ENCODE measurements at regions of chr9 and their contacts with region 1.

Region 1: GRCh38 chr9:38107811-38108304 is 38.8 kb upstream of the SHB start:
- DNase-seq: no peak
- H3K4me3 ChIP-seq: no peak overlapping the region
- H3K27ac ChIP-seq: no peak overlapping the region
- H3K4me1 ChIP-seq: no peaks in the 10 kb centered on the region
- H3K27me3 ChIP-seq: no peaks in the 10 kb centered on the region
- CTCF ChIP-seq: no peak
- EP300 ChIP-seq: no peak
- POLR2A ChIP-seq: no peak

Region 2: GRCh38 chr9:37640246-37640645 is 467.6 kb before region 1 on chr9:
- intact Hi-C with region 1: loop called in 1 of 4 experiments (anchors 5 kb)
- DNase-seq: no peak
- H3K4me3 ChIP-seq: no peak overlapping the region
- H3K27ac ChIP-seq: no peak overlapping the region
- H3K4me1 ChIP-seq: no peaks in the 10 kb centered on the region
- H3K27me3 ChIP-seq: no peaks in the 10 kb centered on the region
- CTCF ChIP-seq: no peak
- EP300 ChIP-seq: no peak
- POLR2A ChIP-seq: no peak

Region 3: DNA sequence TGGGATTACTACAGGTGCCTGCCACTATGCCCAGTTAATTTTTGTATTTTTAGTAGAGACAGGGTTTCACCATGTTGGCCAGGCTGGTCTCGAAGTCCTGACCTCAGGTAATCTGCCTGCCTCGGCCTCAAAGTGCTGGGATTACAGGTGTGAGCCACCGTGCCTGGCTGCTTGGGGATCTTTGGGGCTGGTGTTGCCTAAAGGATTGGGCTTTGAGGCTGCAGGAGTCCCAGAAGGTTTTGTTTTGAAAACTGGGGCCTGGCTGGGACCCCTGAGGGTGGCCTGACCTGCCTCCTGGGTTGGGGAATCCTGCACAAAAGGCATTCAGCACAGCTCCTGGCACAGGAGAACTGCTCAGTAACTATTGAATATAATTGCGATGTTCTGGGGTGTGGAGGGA is 13.7 kb before region 1 on chr9:
- intact Hi-C with region 1: loop called in 1 of 4 experiments (anchors 2 kb)
- DNase-seq: no peak
- H3K4me3 ChIP-seq: no peak overlapping the region
- H3K27ac ChIP-seq: no peak overlapping the region
- H3K4me1 ChIP-seq: no peaks in the 10 kb centered on the region
- H3K27me3 ChIP-seq: no peaks in the 10 kb centered on the region
- CTCF ChIP-seq: no peak
- EP300 ChIP-seq: no peak
- POLR2A ChIP-seq: no peak

Measured in ovary (tissue), 10 donors.